Caco-2 (cell line): ENCODE measurements at regions of chr11 and their contacts with region 1.

Region 1: DNA sequence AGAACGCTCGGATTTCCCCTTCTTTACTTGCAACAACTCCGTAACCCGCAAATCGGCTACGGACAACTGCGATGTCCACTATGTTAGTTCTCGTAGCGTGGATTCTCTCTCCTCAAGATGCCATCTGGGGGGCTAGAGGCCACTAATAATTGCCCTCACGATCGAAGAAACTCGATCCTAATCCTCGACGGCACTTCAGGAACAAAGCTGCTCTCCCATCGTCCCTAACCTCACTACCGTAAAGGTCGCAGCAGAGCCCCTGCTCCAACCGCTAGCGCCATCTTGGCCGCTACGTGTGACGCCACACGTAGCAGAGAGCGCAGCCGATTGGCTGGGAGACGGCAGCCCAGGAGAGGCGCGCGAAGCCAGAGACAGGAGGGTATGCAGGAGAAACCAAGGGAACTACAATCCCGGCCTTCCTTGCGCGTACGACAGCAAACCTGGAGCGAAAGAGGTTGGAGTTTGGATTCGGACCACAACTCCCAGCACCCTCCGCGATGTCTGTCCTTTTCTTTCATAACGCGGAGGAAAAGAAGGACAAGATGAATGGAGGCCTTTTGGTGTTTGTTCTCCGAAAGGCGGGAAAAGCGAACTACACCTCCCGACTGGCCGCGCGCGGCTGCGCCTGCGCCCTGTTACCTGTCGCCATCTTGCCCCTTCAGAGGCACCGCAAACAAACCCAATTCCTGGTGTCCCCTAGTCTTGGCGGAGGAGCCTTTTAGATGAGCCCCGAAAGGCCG is at the start of gene EMSY:
- DNase-seq: peak; percentile 99 to 100
- H3K4me3 ChIP-seq: peak within 1 kb of the TSS; percentile 92
- H3K4me3 Mint-ChIP-seq: peak within 1 kb of the TSS; percentile 98
- H3K27ac Mint-ChIP-seq: peak within 1 kb of the TSS; percentile 99
- H3K4me1 ChIP-seq: peaks cover 15% of the 10 kb centered on the region
- H3K4me1 Mint-ChIP-seq: peaks cover 27% of the 10 kb centered on the region
- H3K27me3 ChIP-seq: no peaks in the 10 kb centered on the region
- H3K27me3 Mint-ChIP-seq: no peaks in the 10 kb centered on the region
- CTCF ChIP-seq: no peak
- total RNA-seq, gene EMSY: 43.6 and 53.6 TPM in 2 replicates

Region 2: DNA sequence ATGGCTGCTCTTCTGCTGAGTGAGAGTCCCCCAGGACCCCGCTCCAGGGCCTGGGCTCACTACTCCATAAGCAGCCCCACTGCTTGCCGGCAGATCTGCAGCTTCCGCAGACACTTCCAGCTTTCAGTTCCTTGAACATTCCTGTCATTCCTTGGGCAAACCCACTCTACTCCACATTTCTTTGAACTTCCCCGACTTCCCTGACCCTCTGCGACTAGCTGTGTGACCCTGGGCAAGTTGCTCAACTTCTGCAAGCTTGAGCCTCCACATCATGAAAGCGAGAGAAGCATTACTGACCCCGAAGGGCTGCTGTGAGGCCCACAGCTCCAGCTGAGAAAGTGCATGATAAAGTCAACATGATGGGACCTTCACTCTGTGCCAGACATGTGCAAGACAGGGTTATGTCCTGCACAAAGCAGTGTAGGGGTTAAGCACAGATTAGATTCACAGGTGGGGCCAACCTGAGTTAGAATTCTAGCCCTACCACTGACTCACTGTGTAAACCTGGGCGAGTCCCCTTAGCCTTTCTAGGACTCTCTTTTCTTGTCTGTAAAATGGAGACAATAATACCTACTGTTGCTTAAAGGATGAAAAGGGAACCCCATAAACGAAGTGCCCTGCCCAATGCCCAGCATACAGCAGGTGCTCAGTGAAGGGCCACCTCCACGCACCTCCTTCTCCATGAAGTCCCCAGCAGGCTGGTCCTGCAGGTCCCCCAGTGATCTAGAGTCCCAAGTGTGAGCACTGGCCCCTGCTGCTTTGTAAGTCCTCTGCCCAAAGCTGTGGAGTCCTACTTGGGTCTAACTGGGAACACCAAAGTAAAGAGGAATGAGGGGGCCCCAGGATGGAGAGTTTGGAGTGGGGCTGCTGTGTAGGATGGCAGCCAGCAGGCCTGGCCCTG is 115.2 kb before region 1 on chr11:
- CTCF ChIA-PET with region 1: interaction called, 4 read pairs
- POLR2A ChIA-PET with region 1: no interaction called
- intact Hi-C with region 1: loop called (anchors 2 kb)
- DNase-seq: peak; percentile 97 to 99
- H3K4me3 ChIP-seq: no peak overlapping the region
- H3K4me3 Mint-ChIP-seq: peak overlapping the region; percentile 51
- H3K27ac Mint-ChIP-seq: peak overlapping the region; percentile 84
- H3K4me1 ChIP-seq: peaks cover 39% of the 10 kb centered on the region
- H3K4me1 Mint-ChIP-seq: peaks cover 38% of the 10 kb centered on the region
- H3K27me3 ChIP-seq: no peaks in the 10 kb centered on the region
- H3K27me3 Mint-ChIP-seq: no peaks in the 10 kb centered on the region
- CTCF ChIP-seq: no peak

Region 3: DNA sequence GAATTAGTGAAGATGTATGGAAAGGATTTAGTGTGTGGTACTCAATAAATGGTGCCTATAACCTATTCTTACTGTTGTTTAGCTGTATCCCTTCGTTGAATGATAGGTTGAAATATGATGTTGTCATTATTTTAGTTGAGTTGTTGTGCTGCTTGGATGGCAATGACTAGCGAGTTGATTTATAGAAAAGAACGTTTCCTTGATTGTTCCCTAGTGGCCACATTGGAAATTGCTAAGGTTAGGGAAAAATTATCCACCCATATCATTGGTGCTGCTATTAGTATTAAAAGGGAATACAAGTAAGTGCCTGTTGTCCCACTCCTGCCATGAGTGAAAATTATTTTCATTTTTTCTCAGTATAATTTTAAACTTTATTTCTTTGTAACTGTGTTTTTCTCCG is 14.7 kb after region 1 on chr11:
- CTCF ChIA-PET with region 1: interaction called, 14 read pairs
- POLR2A ChIA-PET with region 1: interaction called, 9 read pairs
- intact Hi-C with region 1: loop called (anchors 1 kb)
- DNase-seq: no peak
- H3K4me3 ChIP-seq: no peak overlapping the region
- H3K4me3 Mint-ChIP-seq: no peak overlapping the region
- H3K27ac Mint-ChIP-seq: no peak overlapping the region
- H3K4me1 ChIP-seq: peaks cover 31% of the 10 kb centered on the region
- H3K4me1 Mint-ChIP-seq: peaks cover 25% of the 10 kb centered on the region
- H3K27me3 ChIP-seq: no peaks in the 10 kb centered on the region
- H3K27me3 Mint-ChIP-seq: no peaks in the 10 kb centered on the region
- CTCF ChIP-seq: peak; percentile 62 to 74

Region 4: GRCh38 chr11:76524919-76525318 is 80.4 kb after region 1 on chr11:
- CTCF ChIA-PET with region 1: interaction called, 3 read pairs
- POLR2A ChIA-PET with region 1: interaction called, 3 read pairs
- intact Hi-C with region 1: loop called (anchors 1 kb)
- DNase-seq: no peak
- H3K4me3 ChIP-seq: no peak overlapping the region
- H3K4me3 Mint-ChIP-seq: no peak overlapping the region
- H3K27ac Mint-ChIP-seq: no peak overlapping the region
- H3K4me1 ChIP-seq: peaks cover 47% of the 10 kb centered on the region
- H3K4me1 Mint-ChIP-seq: peaks cover 50% of the 10 kb centered on the region
- H3K27me3 ChIP-seq: no peaks in the 10 kb centered on the region
- H3K27me3 Mint-ChIP-seq: no peaks in the 10 kb centered on the region
- CTCF ChIP-seq: no peak

Region 5: DNA sequence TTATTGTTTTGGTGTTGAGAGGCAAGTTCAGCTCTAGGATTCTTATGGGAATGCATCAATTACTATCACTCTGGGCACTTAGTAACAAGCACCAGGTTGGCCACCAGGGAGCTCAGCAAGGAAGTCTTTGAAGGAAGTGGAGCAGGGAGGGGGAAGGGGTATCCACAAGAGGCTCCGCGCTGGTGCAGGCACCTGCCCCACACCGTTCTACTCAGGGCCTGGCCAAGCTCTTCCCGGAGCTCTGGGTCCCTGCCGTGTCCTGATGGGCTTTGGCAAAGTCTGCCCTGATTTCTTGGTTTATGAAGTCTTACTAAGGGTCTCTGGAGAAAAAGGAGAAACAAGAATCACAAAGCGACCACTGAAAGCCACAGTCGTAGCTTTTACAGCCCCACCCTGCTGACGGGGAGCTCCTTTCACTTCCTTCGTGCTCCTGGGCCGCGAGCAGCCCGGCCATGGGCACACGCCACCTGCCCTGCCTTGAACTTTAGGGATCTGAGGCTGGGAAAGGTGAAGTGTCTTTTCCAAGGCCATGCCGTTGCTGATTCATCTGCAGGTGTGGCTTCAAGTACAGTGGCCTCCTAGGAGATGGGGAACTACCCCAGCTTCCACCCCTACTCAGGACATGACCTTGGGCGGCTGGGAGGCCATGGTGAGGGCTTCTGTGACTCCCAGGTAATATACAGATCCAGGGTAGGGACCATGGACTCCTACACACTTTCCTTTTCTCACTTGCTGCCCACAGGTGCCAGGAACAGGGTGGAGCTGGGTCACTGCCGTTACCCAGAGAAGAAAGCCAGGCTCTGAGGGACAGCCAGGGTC is 241.9 kb after region 1 on chr11:
- CTCF ChIA-PET with region 1: no interaction called
- POLR2A ChIA-PET with region 1: no interaction called
- intact Hi-C with region 1: no loop called
- DNase-seq: no peak
- H3K4me3 ChIP-seq: no peak overlapping the region
- H3K4me3 Mint-ChIP-seq: no peak overlapping the region
- H3K27ac Mint-ChIP-seq: no peak overlapping the region
- H3K4me1 ChIP-seq: no peaks in the 10 kb centered on the region
- H3K4me1 Mint-ChIP-seq: no peaks in the 10 kb centered on the region
- H3K27me3 ChIP-seq: no peaks in the 10 kb centered on the region
- H3K27me3 Mint-ChIP-seq: peaks cover 4% of the 10 kb centered on the region
- CTCF ChIP-seq: no peak

Region 6: GRCh38 chr11:76700177-76701100 is 255.9 kb after region 1 on chr11:
- CTCF ChIA-PET with region 1: no interaction called
- POLR2A ChIA-PET with region 1: no interaction called
- intact Hi-C with region 1: no loop called
- DNase-seq: peak; percentile 44 to 71
- H3K4me3 ChIP-seq: no peak overlapping the region
- H3K4me3 Mint-ChIP-seq: no peak overlapping the region
- H3K27ac Mint-ChIP-seq: peak overlapping the region; percentile 27
- H3K4me1 ChIP-seq: peaks cover 16% of the 10 kb centered on the region
- H3K4me1 Mint-ChIP-seq: peaks cover 11% of the 10 kb centered on the region
- H3K27me3 ChIP-seq: no peaks in the 10 kb centered on the region
- H3K27me3 Mint-ChIP-seq: peaks cover 4% of the 10 kb centered on the region
- CTCF ChIP-seq: no peak

Region 7: GRCh38 chr11:76860539-76861475 is 416.3 kb after region 1 on chr11 and contains the start of gene ACER3:
- CTCF ChIA-PET with region 1: no interaction called
- POLR2A ChIA-PET with region 1: interaction called, 6 read pairs
- intact Hi-C with region 1: loop called (anchors 1 kb)
- DNase-seq: peak; percentile 95 to 99
- H3K4me3 ChIP-seq: peak within 1 kb of the TSS; percentile 73
- H3K4me3 Mint-ChIP-seq: peak within 1 kb of the TSS; percentile 94
- H3K27ac Mint-ChIP-seq: peak within 1 kb of the TSS; percentile 85
- H3K4me1 ChIP-seq: peaks cover 27% of the 10 kb centered on the region
- H3K4me1 Mint-ChIP-seq: peaks cover 35% of the 10 kb centered on the region
- H3K27me3 ChIP-seq: no peaks in the 10 kb centered on the region
- H3K27me3 Mint-ChIP-seq: no peaks in the 10 kb centered on the region
- CTCF ChIP-seq: peak in 1 of 2 experiments; percentile 72
- total RNA-seq, gene ACER3: 37.5 and 40.6 TPM in 2 replicates